ENCODE measurements at regions of chr5 and their contacts with region 1.

Region 1: DNA sequence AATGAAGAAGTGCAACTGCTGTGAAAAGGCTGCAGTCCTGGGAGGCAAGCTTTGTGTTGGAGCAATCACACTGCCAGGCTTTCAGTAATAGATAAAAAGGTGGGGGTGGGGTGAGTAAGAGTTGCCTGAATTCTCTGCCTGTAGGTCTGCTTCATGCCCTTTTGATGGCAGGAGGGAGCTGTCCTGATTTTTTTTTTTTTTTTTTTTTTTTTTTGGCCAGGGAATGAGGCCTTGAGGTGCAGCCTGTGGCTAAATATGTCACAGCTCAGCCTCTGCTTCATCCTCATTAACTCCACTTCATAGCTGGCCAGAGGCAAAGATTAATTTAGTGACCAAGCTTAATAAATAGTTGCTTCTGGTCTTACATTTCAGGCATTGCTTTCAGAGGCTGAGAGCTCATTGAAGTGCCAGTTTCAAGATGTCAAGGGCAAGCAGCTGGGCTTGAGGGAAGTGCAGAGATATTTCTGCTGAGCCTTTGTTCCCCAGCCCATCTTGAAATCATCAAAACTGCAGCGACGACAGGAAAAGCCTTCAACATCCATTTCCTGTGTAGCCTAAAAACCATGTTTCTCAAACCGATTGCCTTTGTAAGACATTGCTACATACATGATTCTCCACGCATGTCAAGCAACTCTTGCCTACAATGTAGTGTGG is 134.7 kb downstream of the MACIR start:
- DNase-seq: no peak
- H3K4me3 ChIP-seq: no peak overlapping the region
- H3K27ac ChIP-seq: no peak overlapping the region
- H3K4me1 ChIP-seq: peaks cover 0 to 17% (median 11%) of the 10 kb centered on the region in 4 experiments; a peak in 4 of 7 replicates
- H3K27me3 ChIP-seq: no peaks in the 10 kb centered on the region
- CTCF ChIP-seq: peak in 2 of 3 experiments; percentile 34 to 44; a peak in 3 of 4 replicates
- EP300 ChIP-seq: no peak
- POLR2A ChIP-seq: no peak
- RAD21 ChIP-seq: peak; percentile 54 to 65

Region 2: GRCh38 chr5:103166706-103167105 is 226.5 kb before region 1 on chr5:
- CTCF ChIA-PET with region 1: no interaction called
- POLR2A ChIA-PET with region 1: no interaction called
- DNase-seq: no peak
- H3K4me3 ChIP-seq: no peak overlapping the region
- H3K27ac ChIP-seq: no peak overlapping the region
- H3K4me1 ChIP-seq: no peaks in the 10 kb centered on the region
- H3K27me3 ChIP-seq: no peaks in the 10 kb centered on the region
- CTCF ChIP-seq: no peak
- EP300 ChIP-seq: no peak
- POLR2A ChIP-seq: no peak
- RAD21 ChIP-seq: no peak

Region 3: GRCh38 chr5:103428411-103428871 is 35.2 kb after region 1 on chr5:
- CTCF ChIA-PET with region 1: interaction called, 12 read pairs
- POLR2A ChIA-PET with region 1: no interaction called
- DNase-seq: no peak
- H3K4me3 ChIP-seq: no peak overlapping the region
- H3K27ac ChIP-seq: no peak overlapping the region
- H3K4me1 ChIP-seq: no peaks in the 10 kb centered on the region
- H3K27me3 ChIP-seq: no peaks in the 10 kb centered on the region
- CTCF ChIP-seq: no peak
- EP300 ChIP-seq: no peak
- POLR2A ChIP-seq: no peak
- RAD21 ChIP-seq: no peak